PC-9 (cell line): ENCODE measurements at regions of chr14 and their contacts with region 1.

Region 1: GRCh38 chr14:32648434-32648833 is 290.2 kb upstream of the NPAS3 start:
- DNase-seq: peak in 1 of 2 experiments; percentile 42
- H3K4me3 ChIP-seq: no peak overlapping the region
- H3K27ac ChIP-seq: no peak overlapping the region
- H3K4me1 ChIP-seq: no peaks in the 10 kb centered on the region
- H3K27me3 ChIP-seq: no peaks in the 10 kb centered on the region
- CTCF ChIP-seq: no peak

Region 2: DNA sequence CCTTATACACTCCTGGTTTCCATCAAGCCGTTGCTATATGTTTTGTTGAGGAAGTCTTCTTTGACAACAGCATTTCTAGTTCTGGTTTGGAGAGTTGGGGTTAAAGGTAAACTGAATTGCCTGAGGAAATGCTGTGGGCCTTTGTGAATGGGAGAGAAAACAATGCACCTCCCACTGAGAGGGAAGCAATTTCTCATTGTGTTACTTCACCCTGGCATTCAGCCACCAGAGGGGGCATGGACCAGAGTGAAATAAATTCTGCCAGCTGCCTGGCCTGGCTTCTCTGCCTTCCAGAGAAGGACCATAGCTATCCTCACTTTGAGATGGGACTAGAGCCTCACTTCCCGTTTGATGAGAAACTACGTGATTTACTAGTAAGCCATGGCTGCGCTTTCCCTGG is 827.2 kb after region 1 on chr14:
- CTCF ChIA-PET with region 1: no interaction called
- POLR2A ChIA-PET with region 1: interaction called, 12 read pairs
- intact Hi-C with region 1: no loop called
- DNase-seq: peak; percentile 46 to 60
- H3K4me3 ChIP-seq: no peak overlapping the region
- H3K27ac ChIP-seq: no peak overlapping the region
- H3K4me1 ChIP-seq: peaks cover 11% of the 10 kb centered on the region; the same call in 1 of the 2 replicates
- H3K27me3 ChIP-seq: no peaks in the 10 kb centered on the region
- CTCF ChIP-seq: peak; percentile 50